A549 (cell line): ENCODE measurements at regions of chr17 and their contacts with region 1.

Region 1: GRCh38 chr17:59311130-59311920 is 20.1 kb upstream of the YPEL2 start:
- DNase-seq: peak; percentile 63 to 71
- ATAC-seq: peak; percentile 95 to 96
- H3K4me3 ChIP-seq: no peak overlapping the region
- H3K27ac ChIP-seq: no peak overlapping the region
- H3K4me1 ChIP-seq: no peaks in the 10 kb centered on the region
- CTCF ChIP-seq: peak; percentile 99
- EP300 ChIP-seq: no peak
- POLR2A ChIP-seq: no peak
- RAD21 ChIP-seq: peak; percentile 96

Region 2: GRCh38 chr17:59331129-59331928 is 20.0 kb after region 1 on chr17 and contains the start of gene YPEL2:
- CTCF ChIA-PET with region 1: interaction called, 32 read pairs
- POLR2A ChIA-PET with region 1: no interaction called
- DNase-seq: peak; percentile 95 to 98
- ATAC-seq: peak; percentile 85 to 97
- H3K4me3 ChIP-seq: peak within 1 kb of the TSS; percentile 99
- H3K27ac ChIP-seq: peak within 1 kb of the TSS; percentile 75 to 87
- H3K4me1 ChIP-seq: peaks cover 40% of the 10 kb centered on the region
- CTCF ChIP-seq: no peak; the same call in 2 of the 3 replicates
- EP300 ChIP-seq: no peak
- POLR2A ChIP-seq: peak; percentile 45; the same call in 1 of the 2 replicates
- RAD21 ChIP-seq: no peak
- polyA plus RNA-seq, gene YPEL2: 8.2 and 9.6 TPM in 2 replicates

Region 3: DNA sequence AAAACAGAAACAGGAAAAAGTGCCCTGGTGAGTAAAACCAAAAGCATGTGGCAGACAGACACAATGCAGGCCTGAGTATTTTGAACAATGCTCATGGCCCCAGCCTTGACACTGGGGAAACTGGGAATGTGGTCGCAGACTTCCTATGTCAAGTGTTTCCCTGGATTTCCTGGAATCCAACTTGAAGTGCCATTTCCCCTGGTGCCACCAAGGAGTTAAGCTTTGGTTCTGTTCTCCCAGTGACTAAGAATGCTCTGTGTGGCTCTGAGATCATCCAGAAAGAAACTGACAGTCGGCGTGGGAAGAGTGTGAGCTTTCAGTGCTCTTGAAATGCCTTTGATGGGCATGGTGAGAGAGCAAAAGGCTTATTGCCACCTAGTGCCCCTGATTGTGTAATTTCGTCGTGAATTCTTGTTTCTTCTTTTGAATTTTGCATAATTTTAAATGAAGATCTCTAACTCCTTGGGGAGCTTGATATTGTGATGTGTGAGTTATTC is 116.1 kb after region 1 on chr17:
- CTCF ChIA-PET with region 1: interaction called, 385 read pairs
- POLR2A ChIA-PET with region 1: no interaction called
- DNase-seq: peak in 1 of 2 experiments; percentile 20
- ATAC-seq: no peak
- H3K4me3 ChIP-seq: no peak overlapping the region
- H3K27ac ChIP-seq: peak overlapping the region in 1 of 2 experiments; percentile 23; a peak in 1 of 6 replicates
- H3K4me1 ChIP-seq: peaks cover 11% of the 10 kb centered on the region
- CTCF ChIP-seq: no peak
- EP300 ChIP-seq: no peak
- POLR2A ChIP-seq: no peak
- RAD21 ChIP-seq: no peak

Region 4: GRCh38 chr17:59451706-59452105 is 140.4 kb after region 1 on chr17:
- CTCF ChIA-PET with region 1: interaction called, 385 read pairs
- POLR2A ChIA-PET with region 1: no interaction called
- DNase-seq: peak in 1 of 2 experiments; percentile 34
- ATAC-seq: peak in 1 of 2 experiments; percentile 57; a peak in 4 of 6 replicates
- H3K4me3 ChIP-seq: no peak overlapping the region
- H3K27ac ChIP-seq: no peak overlapping the region
- H3K4me1 ChIP-seq: no peaks in the 10 kb centered on the region
- CTCF ChIP-seq: no peak
- EP300 ChIP-seq: no peak
- POLR2A ChIP-seq: no peak
- RAD21 ChIP-seq: no peak